ENCODE measurements at regions of chr2 and their contacts with region 1.

Region 1: GRCh38 chr2:77640924-77641323 is 118.7 kb upstream of the LRRTM4 start:
- DNase-seq: no peak
- H3K4me3 ChIP-seq: no peak overlapping the region
- H3K27ac ChIP-seq: no peak overlapping the region
- H3K27me3 ChIP-seq: no peaks in the 10 kb centered on the region
- CTCF ChIP-seq: no peak

Region 2: GRCh38 chr2:77179297-77179696 is 461.6 kb before region 1 on chr2:
- intact Hi-C with region 1: no loop called
- DNase-seq: no peak
- H3K4me3 ChIP-seq: no peak overlapping the region
- H3K27ac ChIP-seq: no peak overlapping the region
- H3K27me3 ChIP-seq: no peaks in the 10 kb centered on the region
- CTCF ChIP-seq: no peak

Region 3: GRCh38 chr2:77608510-77608909 is 32.4 kb before region 1 on chr2:
- intact Hi-C with region 1: loop called in 1 of 2 experiments (anchors 1 kb)
- DNase-seq: no peak
- H3K4me3 ChIP-seq: no peak overlapping the region
- H3K27ac ChIP-seq: no peak overlapping the region
- H3K27me3 ChIP-seq: no peaks in the 10 kb centered on the region
- CTCF ChIP-seq: no peak

Measured in dorsolateral prefrontal cortex (tissue), 120 donors.